ENCODE measurements at regions of chr5 and their contacts with region 1.

Region 1: GRCh38 chr5:59506285-59506877 is 387.1 kb downstream of the PDE4D start:
- DNase-seq: peak; percentile 45

Region 2: DNA sequence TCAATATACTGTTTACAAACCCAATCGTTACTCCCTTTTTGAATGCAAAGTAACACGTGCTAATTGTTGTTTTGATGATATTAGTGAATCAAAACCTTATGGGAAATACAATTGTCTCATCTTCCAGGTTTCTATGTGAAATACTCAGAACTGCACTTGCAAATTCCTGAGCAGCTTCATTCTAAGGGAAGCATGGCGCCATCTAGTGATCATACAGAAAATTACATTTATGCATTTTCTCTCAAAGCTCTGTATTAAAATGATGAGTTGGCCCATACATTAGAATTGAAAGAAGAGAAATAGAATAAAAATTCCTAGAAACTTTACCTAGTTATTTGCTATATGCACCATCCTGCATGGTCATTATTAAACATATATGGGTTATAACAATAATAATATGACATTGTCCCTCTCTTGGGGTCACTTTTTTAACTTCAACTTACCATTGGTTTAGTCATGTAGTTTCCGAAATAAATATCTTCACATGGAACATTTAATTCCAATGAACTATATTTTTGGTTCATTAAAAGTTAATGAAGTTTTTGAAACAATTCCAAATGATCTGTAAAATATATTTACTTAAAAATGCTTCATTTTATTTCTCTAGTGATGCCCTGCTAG is 167.2 kb after region 1 on chr5:
- in situ Hi-C with region 1: loop called (anchors 25 kb)
- DNase-seq: peak; percentile 60